GM10248 (cell line): ENCODE measurements at regions of chr12 and their contacts with region 1.

Region 1: DNA sequence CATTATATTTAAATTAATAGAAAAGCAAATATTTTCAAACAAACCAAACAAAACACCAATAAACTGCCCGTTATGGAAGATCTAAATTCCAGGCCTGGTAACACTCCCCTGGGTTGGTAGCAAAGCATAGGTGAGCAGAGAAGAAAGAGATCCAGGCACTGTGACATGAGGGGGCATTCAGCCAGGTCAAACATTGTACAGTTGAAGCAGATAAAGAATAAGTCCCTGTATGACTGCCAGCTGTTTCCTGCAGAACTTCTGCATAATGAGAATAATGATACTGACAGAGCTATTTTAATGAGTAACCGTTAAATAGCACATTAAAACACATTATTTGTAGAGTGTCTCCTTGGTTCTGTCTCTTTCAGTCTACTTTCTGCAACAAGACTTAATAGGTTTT is 35.4 kb downstream of the SLC38A1 start:
- DNase-seq: no peak
- CTCF ChIP-seq: no peak

Region 2: GRCh38 chr12:46246021-46246700 is 12.7 kb after region 1 on chr12:
- CTCF ChIA-PET with region 1: interaction called, 10 read pairs
- POLR2A ChIA-PET with region 1: no interaction called
- DNase-seq: no peak
- CTCF ChIP-seq: no peak